Heart right ventricle (tissue), 16 donors: ENCODE measurements at regions of chr11 and their contacts with region 1.

Region 1: GRCh38 chr11:62444236-62444833 is 25.5 kb downstream of the SCGB1A1 start:
- DNase-seq: peak; percentile 61 to 79
- ATAC-seq: peak; percentile 49 to 74 (median 61)
- H3K4me3 ChIP-seq: peak overlapping the region in 9 of 10 donors; percentile 27 to 56 (median 52)
- H3K27ac ChIP-seq: peak overlapping the region; percentile 44 to 91 (median 83)
- H3K4me1 ChIP-seq: peaks cover 23 to 60% (median 46%) of the 10 kb centered on the region in 9 donors
- H3K27me3 ChIP-seq: no peaks in the 10 kb centered on the region
- CTCF ChIP-seq: no peak

Region 2: GRCh38 chr11:62394825-62395538 is 49.4 kb before region 1 on chr11:
- intact Hi-C with region 1: no loop called
- DNase-seq: peak; percentile 81 to 82
- ATAC-seq: peak; percentile 77 to 88 (median 84)
- H3K4me3 ChIP-seq: peak overlapping the region in 9 of 10 donors; percentile 25 to 55 (median 48)
- H3K27ac ChIP-seq: peak overlapping the region; percentile 38 to 84 (median 74)
- H3K4me1 ChIP-seq: peaks cover 21 to 54% (median 39%) of the 10 kb centered on the region in 9 donors
- H3K27me3 ChIP-seq: no peaks in the 10 kb centered on the region
- CTCF ChIP-seq: peak; percentile 59 to 86 (median 74)

Region 3: GRCh38 chr11:62497132-62497915 is 53.0 kb after region 1 on chr11:
- intact Hi-C with region 1: loop called in 2 of 10 experiments (anchors 5 to 10 kb)
- DNase-seq: no peak
- ATAC-seq: peak in 3 of 8 donors; percentile 32 to 48 (median 39)
- H3K4me3 ChIP-seq: no peak overlapping the region
- H3K27ac ChIP-seq: no peak overlapping the region
- H3K4me1 ChIP-seq: peaks cover 1 to 53% (median 33%) of the 10 kb centered on the region in 9 donors
- H3K27me3 ChIP-seq: no peaks in the 10 kb centered on the region
- CTCF ChIP-seq: peak in 7 of 9 donors; percentile 27 to 55 (median 50)

Region 4: GRCh38 chr11:62508268-62509058 is 64.1 kb after region 1 on chr11:
- intact Hi-C with region 1: loop called in 1 of 10 experiments (anchors 10 kb)
- DNase-seq: peak; percentile 76 to 80
- ATAC-seq: peak; percentile 78 to 93 (median 89)
- H3K4me3 ChIP-seq: peak overlapping the region in 4 of 10 donors; percentile 19 to 29 (median 21)
- H3K27ac ChIP-seq: peak overlapping the region; percentile 1 to 89 (median 76)
- H3K4me1 ChIP-seq: peaks cover 7 to 67% (median 45%) of the 10 kb centered on the region in 9 donors
- H3K27me3 ChIP-seq: no peaks in the 10 kb centered on the region
- CTCF ChIP-seq: peak; percentile 6 to 71 (median 45)

Region 5: GRCh38 chr11:62678770-62679696 is 234.7 kb after region 1 on chr11 and contains the start of gene UBXN1:
- intact Hi-C with region 1: no loop called
- DNase-seq: peak; percentile 88 to 94
- ATAC-seq: peak; percentile 90 to 93 (median 93)
- H3K4me3 ChIP-seq: peak within 1 kb of the TSS; percentile 68 to 100 (median 94)
- H3K27ac ChIP-seq: peak within 1 kb of the TSS; percentile 55 to 97 (median 92)
- H3K4me1 ChIP-seq: peaks cover 8 to 45% (median 33%) of the 10 kb centered on the region in 9 donors
- H3K27me3 ChIP-seq: no peaks in the 10 kb centered on the region
- CTCF ChIP-seq: no peak
- total RNA-seq, gene UBXN1: 57.8 to 100 (median 81.2) TPM